SK-N-SH (cell line): ENCODE measurements at regions of chr20 and their contacts with region 1.

Region 1: DNA sequence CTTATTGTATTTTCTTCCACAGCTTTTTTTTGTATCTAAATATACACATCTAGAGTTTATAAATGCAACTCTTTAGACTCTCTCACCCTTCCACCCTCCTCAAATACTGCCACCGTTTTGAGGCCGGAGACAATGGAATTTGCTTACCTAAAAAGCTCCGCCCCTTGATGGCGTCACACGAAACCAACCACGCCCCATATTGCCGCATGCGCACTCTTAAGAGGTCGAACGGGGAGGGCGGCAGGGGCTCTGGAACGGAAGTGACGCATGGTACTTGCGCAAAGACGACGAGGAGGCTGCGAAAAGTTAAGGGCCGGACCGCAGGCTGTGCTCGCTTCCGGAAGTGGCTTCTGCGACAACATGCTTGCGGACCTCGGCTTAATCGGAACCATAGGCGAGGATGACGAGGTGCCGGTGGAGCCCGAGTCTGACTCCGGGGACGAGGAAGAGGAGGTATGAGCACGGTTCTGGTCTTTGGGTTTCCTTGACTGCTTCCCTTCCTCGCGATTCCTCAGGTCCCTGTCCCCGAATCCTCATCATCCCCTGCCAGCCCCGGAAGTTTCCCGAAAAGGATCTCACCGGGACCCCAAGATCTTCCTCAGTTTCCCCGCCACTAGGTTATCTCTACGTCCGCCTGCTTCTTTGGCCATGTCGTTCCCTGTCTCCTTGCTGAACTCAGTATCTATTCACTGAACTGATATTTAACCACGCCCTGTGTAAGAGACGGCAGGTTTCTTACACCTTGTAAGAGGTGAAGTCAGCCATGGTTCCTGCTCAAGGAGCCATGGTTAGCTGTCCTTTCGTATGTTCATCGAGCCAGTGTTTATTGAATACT is at the start of gene DDX27:
- DNase-seq: peak; percentile 95
- H3K4me3 ChIP-seq: peak within 1 kb of the TSS; percentile 80 to 91
- H3K27ac ChIP-seq: peak within 1 kb of the TSS; percentile 65 to 76
- H3K4me1 ChIP-seq: peaks cover 0 to 8% of the 10 kb centered on the region in 2 experiments; a peak in 1 of 4 replicates
- H3K27me3 ChIP-seq: no peaks in the 10 kb centered on the region
- CTCF ChIP-seq: no peak
- EP300 ChIP-seq: no peak
- RAD21 ChIP-seq: no peak
- polyA plus RNA-seq, gene DDX27: 51.9 and 52.4 TPM in 2 replicates

Region 2: DNA sequence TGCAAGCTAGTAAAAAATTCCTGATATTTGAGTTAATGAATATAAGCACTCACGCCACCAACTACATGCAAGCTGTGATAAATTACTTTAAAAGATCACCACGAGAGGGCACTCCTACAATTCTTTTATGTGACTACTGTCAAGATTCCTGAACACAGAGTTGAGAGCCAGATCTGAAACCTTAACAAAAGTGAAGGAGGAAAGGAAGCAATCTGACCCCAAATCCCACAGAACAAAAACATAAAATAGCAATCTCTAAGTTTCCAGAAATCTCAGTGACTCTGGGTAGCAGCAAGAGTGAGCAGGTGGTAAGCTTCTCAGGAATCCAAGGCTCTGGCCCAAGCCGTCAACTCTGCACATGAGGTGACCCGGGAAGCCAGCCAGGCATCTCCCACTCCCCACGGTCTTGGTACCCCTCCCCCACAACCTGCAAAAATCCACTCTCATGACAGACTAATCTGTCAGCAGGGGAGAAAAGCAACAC is 86.3 kb before region 1 on chr20:
- CTCF ChIA-PET with region 1: interaction called, 112 read pairs
- POLR2A ChIA-PET with region 1: interaction called, 7 read pairs
- DNase-seq: peak; percentile 49
- H3K4me3 ChIP-seq: no peak overlapping the region
- H3K27ac ChIP-seq: no peak overlapping the region
- H3K4me1 ChIP-seq: no peaks in the 10 kb centered on the region; a peak in 1 of 4 replicates
- H3K27me3 ChIP-seq: no peaks in the 10 kb centered on the region
- CTCF ChIP-seq: peak; percentile 72
- EP300 ChIP-seq: no peak
- RAD21 ChIP-seq: peak; percentile 79

Region 3: GRCh38 chr20:49161428-49162152 is 57.7 kb before region 1 on chr20:
- CTCF ChIA-PET with region 1: interaction called, 14 read pairs
- POLR2A ChIA-PET with region 1: no interaction called
- DNase-seq: no peak
- H3K4me3 ChIP-seq: no peak overlapping the region
- H3K27ac ChIP-seq: no peak overlapping the region
- H3K4me1 ChIP-seq: peaks cover 0 to 3% of the 10 kb centered on the region in 2 experiments; a peak in 1 of 4 replicates
- H3K27me3 ChIP-seq: no peaks in the 10 kb centered on the region
- CTCF ChIP-seq: no peak
- EP300 ChIP-seq: no peak
- RAD21 ChIP-seq: no peak

Region 4: DNA sequence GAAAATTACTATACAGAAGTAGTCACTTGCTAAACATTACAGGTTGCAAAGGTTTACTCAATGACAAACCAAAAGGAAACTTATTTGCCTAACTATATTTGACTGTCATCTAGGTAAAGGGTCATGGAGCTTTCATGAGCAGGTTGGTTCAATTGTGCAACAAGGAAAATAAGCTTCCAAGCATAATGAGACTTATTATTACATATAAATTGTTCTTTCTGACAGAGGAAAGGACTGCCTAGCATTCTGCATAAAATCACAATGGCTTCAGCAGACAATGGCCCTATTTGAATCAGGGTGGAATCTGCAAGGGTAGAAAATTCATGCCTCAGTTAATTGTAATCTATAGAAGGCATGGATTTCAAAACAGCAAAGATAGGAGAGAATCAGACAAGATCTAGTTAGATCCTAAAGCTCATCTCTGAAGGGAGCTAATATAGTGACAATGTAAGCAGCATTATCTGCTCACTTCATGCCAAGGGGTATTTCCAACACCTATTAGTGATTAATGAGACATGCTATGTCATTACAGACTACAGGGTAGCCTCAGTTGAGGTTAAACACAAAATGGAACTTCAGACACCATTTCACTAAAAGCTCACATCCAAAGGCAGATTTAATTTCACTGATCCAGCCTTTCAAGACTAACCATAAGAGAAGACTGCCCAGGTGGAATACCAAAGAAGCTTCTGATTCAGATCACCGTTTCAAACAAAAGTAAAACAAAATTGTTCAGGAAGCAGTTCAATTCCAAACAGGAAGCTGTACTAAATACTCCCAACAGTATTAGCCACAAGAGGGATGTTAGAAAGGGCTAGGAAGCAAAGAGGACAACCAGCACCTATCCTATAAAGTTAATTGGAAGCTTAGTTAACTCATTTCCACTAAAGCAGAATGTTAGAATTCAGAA is 39.7 kb before region 1 on chr20:
- CTCF ChIA-PET with region 1: interaction called, 17 read pairs
- POLR2A ChIA-PET with region 1: no interaction called
- DNase-seq: no peak
- H3K4me3 ChIP-seq: no peak overlapping the region
- H3K27ac ChIP-seq: 0 out of 4 replicates have a peak overlapping the region, but pooled peaks of 1 of the 2 experiments have one; percentile 1
- H3K4me1 ChIP-seq: peaks cover 2 to 7% of the 10 kb centered on the region in 2 experiments; a peak in 3 of 4 replicates
- H3K27me3 ChIP-seq: no peaks in the 10 kb centered on the region
- CTCF ChIP-seq: no peak
- EP300 ChIP-seq: no peak
- RAD21 ChIP-seq: no peak

Region 5: DNA sequence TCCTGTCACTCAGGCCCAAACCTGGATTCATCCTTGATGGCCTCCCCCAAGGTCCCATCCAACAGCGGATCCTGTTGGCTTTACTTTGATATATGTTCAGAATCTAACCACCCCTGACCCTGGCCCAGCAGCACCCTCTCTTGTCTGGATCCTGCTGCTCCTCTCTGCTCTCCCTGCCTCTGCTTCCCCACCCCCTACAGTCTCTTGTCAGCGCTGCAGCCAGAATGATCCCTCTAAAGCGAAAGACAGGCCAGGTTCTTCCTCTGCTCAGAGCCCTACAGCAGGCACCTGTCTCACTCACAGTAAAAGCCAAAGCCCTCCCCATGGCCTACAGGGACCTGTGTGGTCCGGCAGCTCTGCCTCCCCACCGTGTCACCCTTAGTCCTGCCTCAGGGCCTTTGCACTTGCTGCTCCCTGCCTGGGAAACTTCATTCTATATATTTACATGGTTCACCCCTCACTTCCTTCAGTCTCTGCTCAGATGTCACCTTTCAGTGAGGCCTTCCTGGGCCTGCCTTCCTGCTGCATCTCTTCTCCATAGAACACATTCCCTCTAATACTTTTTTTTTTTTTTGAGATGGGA is 300.6 kb after region 1 on chr20:
- CTCF ChIA-PET with region 1: no interaction called
- POLR2A ChIA-PET with region 1: no interaction called
- DNase-seq: no peak
- H3K4me3 ChIP-seq: no peak overlapping the region
- H3K27ac ChIP-seq: no peak overlapping the region
- H3K4me1 ChIP-seq: no peaks in the 10 kb centered on the region
- H3K27me3 ChIP-seq: no peaks in the 10 kb centered on the region
- CTCF ChIP-seq: no peak
- EP300 ChIP-seq: no peak
- RAD21 ChIP-seq: no peak